ENCODE measurements at regions of chr16 and their contacts with region 1.

Region 1: DNA sequence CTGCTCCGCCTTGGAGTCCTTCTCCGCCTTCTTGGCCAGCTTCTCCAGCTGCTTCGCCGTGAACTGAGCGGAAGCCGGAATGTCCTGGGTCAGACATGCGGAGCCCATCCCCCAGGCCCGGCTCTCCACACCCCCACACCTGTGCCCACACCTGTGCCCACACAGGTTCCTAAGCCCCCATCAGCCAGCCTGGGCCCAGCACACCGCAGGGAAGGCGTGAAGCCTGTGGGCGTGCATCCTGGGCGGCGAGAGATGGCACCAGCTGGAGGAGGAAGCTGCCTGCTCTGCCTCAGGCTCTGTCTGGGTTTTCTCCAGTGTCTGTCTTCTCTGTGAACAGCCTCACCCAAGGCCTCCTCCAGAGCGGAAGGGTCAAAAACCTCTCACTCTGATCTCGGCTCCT is 5.9 kb downstream of the CHMP1A start:
- DNase-seq: no peak
- ATAC-seq: no peak; the same call in 1 of the 2 replicates
- H3K4me3 ChIP-seq: no peak overlapping the region
- H3K27ac ChIP-seq: no peak overlapping the region
- H3K4me1 ChIP-seq: no peaks in the 10 kb centered on the region
- H3K27me3 ChIP-seq: no peaks in the 10 kb centered on the region
- CTCF ChIP-seq: no peak

Region 2: GRCh38 chr16:89586853-89587252 is 64.7 kb before region 1 on chr16:
- CTCF ChIA-PET with region 1: no interaction called
- POLR2A ChIA-PET with region 1: interaction called, 19 read pairs
- in situ Hi-C with region 1: no loop called
- intact Hi-C with region 1: no loop called
- DNase-seq: no peak
- ATAC-seq: no peak; the same call in 1 of the 2 replicates
- H3K4me3 ChIP-seq: no peak overlapping the region
- H3K27ac ChIP-seq: 0 out of 2 replicates have a peak overlapping the region, but pooled peaks have one; percentile 12
- H3K4me1 ChIP-seq: peaks cover 8% of the 10 kb centered on the region
- H3K27me3 ChIP-seq: no peaks in the 10 kb centered on the region
- CTCF ChIP-seq: no peak

Measured in Panc1 (cell line).